ENCODE measurements at regions of chr10 and their contacts with region 1.

Region 1: DNA sequence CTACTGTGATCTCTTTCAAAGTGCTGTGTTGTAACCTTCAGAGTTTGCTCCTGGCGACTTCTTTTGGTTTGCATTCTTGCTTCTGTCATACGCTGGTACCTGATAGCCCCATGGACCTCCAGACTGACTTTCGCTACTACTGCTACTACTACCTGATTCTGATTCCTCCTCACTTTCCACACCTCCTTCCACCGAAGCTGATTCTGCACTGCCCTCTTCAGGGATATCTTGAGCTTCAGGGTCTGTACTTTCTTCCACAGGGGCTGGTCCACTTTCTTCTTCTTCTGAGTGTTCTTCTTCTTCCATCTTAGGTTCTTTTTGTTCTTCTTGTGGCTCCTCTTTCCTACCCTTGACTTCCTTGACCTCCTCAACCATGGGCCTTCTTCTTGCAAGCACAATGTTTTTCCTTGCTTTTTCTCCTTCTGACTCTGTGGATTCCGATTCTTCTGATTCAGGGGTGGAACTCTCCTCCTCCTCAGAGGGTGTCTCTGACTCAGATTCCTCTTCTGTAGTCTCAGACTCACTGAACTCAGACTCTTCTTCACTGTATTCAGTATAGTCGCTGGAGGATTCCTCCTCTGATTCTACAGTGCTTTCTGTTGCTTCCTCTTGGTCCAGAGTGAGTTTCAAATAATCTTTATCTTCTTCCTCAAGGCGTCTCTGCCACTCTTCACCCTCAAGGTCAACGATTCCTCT is 992.2 kb downstream of the PCDH15 start:
- DNase-seq: no peak
- H3K4me3 ChIP-seq: no peak overlapping the region
- H3K27ac ChIP-seq: no peak overlapping the region
- H3K4me1 ChIP-seq: no peaks in the 10 kb centered on the region; a peak in 1 of 7 replicates
- H3K27me3 ChIP-seq: no peaks in the 10 kb centered on the region
- CTCF ChIP-seq: peak in 1 of 3 experiments; percentile 27; a peak in 2 of 4 replicates
- EP300 ChIP-seq: no peak
- POLR2A ChIP-seq: no peak
- RAD21 ChIP-seq: peak; percentile 54 to 70

Region 2: DNA sequence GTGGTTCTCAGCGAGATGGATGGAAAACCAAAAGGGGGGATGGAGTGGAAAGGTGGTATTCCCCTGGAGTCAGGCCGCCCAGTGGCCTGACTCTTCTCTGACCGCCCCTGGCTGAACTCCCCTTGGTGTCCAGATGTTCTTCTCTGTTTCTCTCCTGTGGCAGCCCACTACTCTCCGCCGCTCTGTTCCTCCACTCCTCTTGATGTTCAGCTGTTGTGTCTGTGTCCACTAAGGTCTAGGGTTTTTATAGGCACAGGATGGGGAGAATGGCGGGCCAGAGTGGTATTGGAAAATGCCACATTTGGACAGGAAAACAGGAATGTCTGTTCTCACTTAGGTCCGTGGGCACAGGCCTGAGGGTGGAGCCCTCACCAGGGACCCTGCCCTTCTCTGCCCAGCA is 81.9 kb before region 1 on chr10:
- CTCF ChIA-PET with region 1: no interaction called
- POLR2A ChIA-PET with region 1: no interaction called
- DNase-seq: no peak
- H3K4me3 ChIP-seq: no peak overlapping the region
- H3K27ac ChIP-seq: no peak overlapping the region
- H3K4me1 ChIP-seq: no peaks in the 10 kb centered on the region
- H3K27me3 ChIP-seq: no peaks in the 10 kb centered on the region
- CTCF ChIP-seq: no peak
- EP300 ChIP-seq: no peak
- POLR2A ChIP-seq: no peak
- RAD21 ChIP-seq: no peak

Region 3: DNA sequence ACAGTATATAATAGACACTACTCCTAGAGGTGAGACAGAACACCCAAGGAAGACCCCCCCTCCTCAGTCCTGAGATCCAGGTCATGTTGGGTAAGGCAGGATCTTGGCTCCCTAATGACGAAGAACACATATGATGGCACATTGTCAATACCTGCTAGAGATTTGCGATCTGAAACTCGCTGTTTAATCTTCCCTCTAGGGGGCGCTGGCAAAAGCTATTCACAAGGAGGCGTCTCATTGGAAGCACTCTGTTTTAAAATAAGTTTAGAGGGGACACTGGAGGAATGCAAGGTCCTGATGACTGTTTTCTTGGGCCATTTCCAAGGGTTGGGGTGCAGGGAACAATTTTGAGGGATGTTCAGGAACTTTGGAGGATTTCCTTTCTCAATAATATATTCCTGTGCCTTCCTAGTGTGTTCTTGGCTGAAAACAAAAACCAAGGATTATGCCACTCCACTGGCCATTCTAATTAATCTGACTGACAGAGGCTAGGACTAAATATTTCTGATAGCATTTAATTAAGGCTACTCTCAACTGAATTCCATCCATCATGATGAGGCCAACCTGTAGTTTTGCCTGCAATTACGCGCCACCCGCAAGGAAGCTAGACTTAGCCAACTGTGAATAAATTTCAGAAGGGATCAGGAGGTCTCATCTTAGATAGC is 22.5 kb before region 1 on chr10:
- CTCF ChIA-PET with region 1: interaction called, 11 read pairs
- POLR2A ChIA-PET with region 1: no interaction called
- DNase-seq: peak in 1 of 2 experiments; percentile 73
- H3K4me3 ChIP-seq: no peak overlapping the region
- H3K27ac ChIP-seq: no peak overlapping the region
- H3K4me1 ChIP-seq: no peaks in the 10 kb centered on the region
- H3K27me3 ChIP-seq: peaks cover 0 to 1% (median 0%) of the 10 kb centered on the region in 4 experiments; a peak in 1 of 7 replicates
- CTCF ChIP-seq: peak in 2 of 3 experiments; percentile 64 to 80; a peak in 3 of 4 replicates
- EP300 ChIP-seq: no peak
- POLR2A ChIP-seq: no peak
- RAD21 ChIP-seq: peak; percentile 47 to 57

Measured in H1 (cell line).